PC-9 (cell line): ENCODE measurements at regions of chr7 and their contacts with region 1.

Region 1: GRCh38 chr7:47945261-47946001 is 2.8 kb downstream of the PKD1L1 start:
- DNase-seq: peak; percentile 58 to 66
- H3K4me3 ChIP-seq: no peak overlapping the region
- H3K27ac ChIP-seq: no peak overlapping the region
- H3K4me1 ChIP-seq: peaks cover 29% of the 10 kb centered on the region
- H3K27me3 ChIP-seq: no peaks in the 10 kb centered on the region
- CTCF ChIP-seq: peak; percentile 99

Region 2: DNA sequence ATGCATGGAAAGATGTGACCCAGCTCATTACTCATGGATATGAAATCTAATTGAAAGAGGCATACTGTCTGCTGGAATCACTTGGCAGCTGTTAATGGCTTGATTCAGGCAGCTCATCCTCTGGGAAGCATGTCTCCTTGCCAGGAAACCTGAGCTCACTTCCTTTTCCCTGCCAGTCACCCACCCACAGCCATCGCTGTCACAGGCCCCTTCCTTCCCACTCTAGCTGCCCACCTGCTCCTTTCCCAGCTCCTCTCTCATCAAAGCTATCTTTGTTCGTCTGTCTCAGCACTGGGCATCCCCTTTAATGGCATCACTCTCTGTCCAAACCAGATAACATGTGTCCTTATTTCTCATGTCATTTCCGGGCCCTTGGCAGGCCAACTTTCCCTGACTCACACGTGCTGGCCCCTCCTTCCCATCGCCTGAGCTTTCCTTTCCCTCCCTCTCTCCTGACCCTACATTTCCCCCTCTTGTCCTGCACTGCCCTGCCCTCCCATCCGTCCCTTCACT is 1085.4 kb before region 1 on chr7:
- CTCF ChIA-PET with region 1: no interaction called
- POLR2A ChIA-PET with region 1: no interaction called
- intact Hi-C with region 1: no loop called
- DNase-seq: no peak
- H3K4me3 ChIP-seq: no peak overlapping the region
- H3K27ac ChIP-seq: no peak overlapping the region
- H3K4me1 ChIP-seq: no peaks in the 10 kb centered on the region
- H3K27me3 ChIP-seq: no peaks in the 10 kb centered on the region
- CTCF ChIP-seq: no peak

Region 3: DNA sequence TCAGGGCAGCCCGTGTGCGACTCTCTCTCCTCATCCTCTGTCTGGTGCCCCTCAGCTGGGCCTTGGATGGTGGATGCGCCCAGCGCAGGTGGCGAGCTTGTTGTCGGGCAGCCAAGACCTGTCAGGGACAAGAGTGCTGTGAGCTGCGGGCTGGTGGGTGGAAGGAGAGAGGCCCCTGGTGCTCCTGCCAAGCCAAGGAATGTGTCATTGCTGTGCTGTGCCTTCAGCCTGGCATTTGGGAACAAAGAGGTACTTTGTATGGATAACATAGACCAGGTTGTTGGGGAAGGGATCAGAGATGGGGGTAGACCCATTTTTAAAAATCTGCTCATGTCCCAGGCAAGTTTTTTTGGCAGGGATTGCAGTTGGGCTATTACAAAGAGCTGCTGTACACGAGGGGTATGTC is 118.1 kb before region 1 on chr7:
- CTCF ChIA-PET with region 1: no interaction called
- POLR2A ChIA-PET with region 1: no interaction called
- intact Hi-C with region 1: loop called (anchors 10 kb)
- DNase-seq: no peak
- H3K4me3 ChIP-seq: no peak overlapping the region
- H3K27ac ChIP-seq: no peak overlapping the region
- H3K4me1 ChIP-seq: no peaks in the 10 kb centered on the region
- H3K27me3 ChIP-seq: no peaks in the 10 kb centered on the region
- CTCF ChIP-seq: no peak

Region 4: DNA sequence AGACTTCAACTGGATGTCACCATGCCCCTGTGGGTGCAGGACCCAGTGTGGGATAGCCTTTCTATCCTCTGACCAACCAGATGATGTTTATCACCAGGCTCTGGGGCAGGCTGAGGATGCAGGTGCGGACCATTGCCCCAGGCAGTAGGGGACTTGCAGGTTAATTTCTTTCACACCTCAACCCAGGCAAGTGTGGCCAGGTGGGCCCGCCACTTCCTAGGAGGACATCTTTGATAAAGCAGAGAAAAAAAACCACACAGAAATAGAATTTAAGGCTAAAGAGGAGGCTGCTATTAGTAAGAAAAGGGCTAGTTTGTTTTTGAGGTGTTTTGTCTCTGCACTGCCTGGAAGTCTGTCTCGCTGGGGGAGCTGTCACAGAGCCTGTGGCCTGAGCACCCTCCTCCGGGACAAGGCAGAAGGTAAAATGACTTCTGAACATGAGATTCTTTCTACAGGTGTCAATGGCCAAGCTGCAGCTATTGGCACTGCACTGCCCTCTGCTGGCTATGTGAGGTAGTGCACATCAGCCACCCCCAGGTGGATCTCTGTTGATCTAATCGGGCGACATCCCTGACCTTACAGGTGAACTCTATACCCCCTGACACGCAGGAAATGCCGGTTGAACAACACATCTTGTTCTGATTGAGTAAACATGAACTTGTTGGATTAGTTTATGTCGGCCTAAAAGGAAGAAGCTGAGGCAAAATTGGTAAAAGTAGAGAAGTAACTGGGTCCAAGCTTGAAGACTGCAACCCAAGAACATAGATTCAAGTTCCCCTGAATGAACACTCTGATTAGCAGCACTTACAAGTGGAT is 164.6 kb after region 1 on chr7:
- CTCF ChIA-PET with region 1: interaction called, 4 read pairs
- POLR2A ChIA-PET with region 1: no interaction called
- intact Hi-C with region 1: loop called (anchors 1 kb)
- DNase-seq: peak; percentile 95 to 96
- H3K4me3 ChIP-seq: peak overlapping the region; percentile 6; the same call in 1 of the 2 replicates
- H3K27ac ChIP-seq: peak overlapping the region; percentile 9
- H3K4me1 ChIP-seq: peaks cover 40% of the 10 kb centered on the region
- H3K27me3 ChIP-seq: no peaks in the 10 kb centered on the region
- CTCF ChIP-seq: peak; percentile 100

Region 5: GRCh38 chr7:48154792-48155413 is 209.5 kb after region 1 on chr7:
- CTCF ChIA-PET with region 1: interaction called, 15 read pairs
- POLR2A ChIA-PET with region 1: no interaction called
- intact Hi-C with region 1: loop called (anchors 1 kb)
- DNase-seq: peak; percentile 63 to 66
- H3K4me3 ChIP-seq: no peak overlapping the region
- H3K27ac ChIP-seq: no peak overlapping the region
- H3K4me1 ChIP-seq: peaks cover 7% of the 10 kb centered on the region; the same call in 1 of the 2 replicates
- H3K27me3 ChIP-seq: peaks cover 32% of the 10 kb centered on the region
- CTCF ChIP-seq: peak; percentile 93

Region 6: GRCh38 chr7:48299580-48300169 is 354.2 kb after region 1 on chr7:
- CTCF ChIA-PET with region 1: no interaction called
- POLR2A ChIA-PET with region 1: no interaction called
- intact Hi-C with region 1: loop called (anchors 5 kb)
- DNase-seq: peak in 1 of 2 experiments; percentile 48
- H3K4me3 ChIP-seq: no peak overlapping the region
- H3K27ac ChIP-seq: no peak overlapping the region
- H3K4me1 ChIP-seq: no peaks in the 10 kb centered on the region
- H3K27me3 ChIP-seq: peaks cover 35% of the 10 kb centered on the region
- CTCF ChIP-seq: peak; percentile 88

Region 7: GRCh38 chr7:48875045-48875916 is 929.9 kb after region 1 on chr7:
- CTCF ChIA-PET with region 1: no interaction called
- POLR2A ChIA-PET with region 1: no interaction called
- intact Hi-C with region 1: loop called (anchors 5 kb)
- DNase-seq: peak in 1 of 2 experiments; percentile 30
- H3K4me3 ChIP-seq: no peak overlapping the region
- H3K27ac ChIP-seq: no peak overlapping the region
- H3K4me1 ChIP-seq: no peaks in the 10 kb centered on the region
- H3K27me3 ChIP-seq: no peaks in the 10 kb centered on the region
- CTCF ChIP-seq: peak; percentile 64